B cell (primary cell): ENCODE measurements at regions of chr7 and their contacts with region 1.

Region 1: DNA sequence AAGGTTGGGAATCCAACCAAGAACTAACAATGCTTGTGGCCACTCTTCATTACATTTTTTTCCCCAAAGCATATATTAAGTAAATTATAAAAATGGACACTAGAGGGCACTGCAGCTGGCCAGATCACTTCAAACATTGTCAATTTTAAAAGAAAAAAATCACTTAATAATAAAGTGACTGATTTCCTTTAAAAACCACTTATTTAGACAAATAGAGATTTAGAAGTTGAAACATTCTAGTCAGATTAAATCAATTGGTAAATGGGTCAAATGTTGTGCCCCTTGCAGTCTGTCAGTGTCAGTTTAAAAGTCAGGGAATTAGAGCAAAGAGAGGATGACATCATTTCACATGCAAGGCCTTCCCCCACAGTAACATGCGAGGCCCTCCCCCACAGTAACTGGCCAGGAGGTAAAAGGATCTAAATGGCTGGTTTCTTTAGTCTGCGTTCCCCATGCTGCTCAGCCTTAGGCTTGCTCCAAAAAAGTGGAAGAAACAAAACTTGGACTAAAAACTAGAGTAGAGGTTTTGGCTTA is 177.9 kb downstream of the SKAP2 start:
- DNase-seq: peak; percentile 60
- ATAC-seq: no peak
- H3K4me3 ChIP-seq: no peak overlapping the region
- H3K4me3 Mint-ChIP-seq: no peak overlapping the region
- H3K27ac ChIP-seq: no peak overlapping the region
- H3K27ac Mint-ChIP-seq: no peak overlapping the region
- H3K4me1 ChIP-seq: peaks cover 7 to 14% of the 10 kb centered on the region in 2 donors
- H3K4me1 Mint-ChIP-seq: peaks cover 28% of the 10 kb centered on the region
- H3K27me3 ChIP-seq: no peaks in the 10 kb centered on the region
- H3K27me3 Mint-ChIP-seq: no peaks in the 10 kb centered on the region
- CTCF ChIP-seq: peak; percentile 87

Region 2: GRCh38 chr7:26673271-26673670 is 13.2 kb before region 1 on chr7:
- CTCF ChIA-PET with region 1: interaction called, 14 read pairs
- POLR2A ChIA-PET with region 1: no interaction called
- intact Hi-C with region 1: no loop called
- DNase-seq: no peak
- ATAC-seq: no peak
- H3K4me3 ChIP-seq: no peak overlapping the region
- H3K4me3 Mint-ChIP-seq: no peak overlapping the region
- H3K27ac ChIP-seq: no peak overlapping the region
- H3K27ac Mint-ChIP-seq: no peak overlapping the region
- H3K4me1 ChIP-seq: peaks cover 0 to 8% of the 10 kb centered on the region in 2 donors
- H3K4me1 Mint-ChIP-seq: peaks cover 15% of the 10 kb centered on the region
- H3K27me3 ChIP-seq: no peaks in the 10 kb centered on the region
- H3K27me3 Mint-ChIP-seq: no peaks in the 10 kb centered on the region
- CTCF ChIP-seq: no peak

Region 3: GRCh38 chr7:26705567-26705966 is 19.1 kb after region 1 on chr7:
- CTCF ChIA-PET with region 1: interaction called, 12 read pairs
- POLR2A ChIA-PET with region 1: no interaction called
- intact Hi-C with region 1: no loop called
- DNase-seq: no peak
- ATAC-seq: no peak
- H3K4me3 ChIP-seq: no peak overlapping the region
- H3K4me3 Mint-ChIP-seq: no peak overlapping the region
- H3K27ac ChIP-seq: no peak overlapping the region
- H3K27ac Mint-ChIP-seq: no peak overlapping the region
- H3K4me1 ChIP-seq: no peaks in the 10 kb centered on the region
- H3K4me1 Mint-ChIP-seq: peaks cover 4% of the 10 kb centered on the region
- H3K27me3 ChIP-seq: no peaks in the 10 kb centered on the region
- H3K27me3 Mint-ChIP-seq: no peaks in the 10 kb centered on the region
- CTCF ChIP-seq: no peak